ENCODE measurements at regions of chr4 and their contacts with region 1.

Region 1: DNA sequence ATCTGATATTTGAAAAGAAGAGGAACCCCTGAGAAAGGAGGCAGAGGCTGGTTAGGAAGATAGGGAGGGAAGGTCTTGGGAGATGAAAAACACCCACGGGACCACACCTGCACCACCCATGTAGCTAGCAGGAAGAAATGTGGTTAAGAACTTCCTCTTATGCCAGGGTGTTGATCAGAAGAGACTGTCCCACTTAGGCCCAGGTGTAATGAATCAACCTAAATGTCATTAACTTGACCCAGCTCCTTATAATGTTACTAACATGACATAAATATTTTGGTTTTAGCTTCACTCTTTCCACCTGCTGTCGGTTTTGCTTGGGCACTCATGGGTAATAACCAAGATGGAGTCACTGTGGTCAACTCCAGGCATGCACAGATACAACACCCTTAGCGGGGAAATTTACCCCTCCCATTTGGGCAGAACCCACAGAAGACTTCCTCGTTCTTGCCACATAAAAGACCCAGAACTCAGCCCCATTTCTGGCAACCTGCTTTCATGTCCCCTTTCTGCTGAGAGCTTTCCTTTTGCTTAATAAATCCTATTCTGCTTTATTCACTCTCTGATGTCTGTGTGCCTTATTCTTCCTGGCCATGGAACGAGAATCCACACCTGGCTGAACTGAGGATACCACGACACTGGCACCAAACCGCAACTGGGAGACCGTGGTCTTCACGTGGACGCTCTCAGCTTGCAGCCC is 46.8 kb downstream of the ZNF141 start:
- DNase-seq: no peak
- H3K4me3 ChIP-seq: no peak overlapping the region
- H3K27ac ChIP-seq: no peak overlapping the region
- H3K4me1 ChIP-seq: no peaks in the 10 kb centered on the region
- H3K27me3 ChIP-seq: no peaks in the 10 kb centered on the region
- CTCF ChIP-seq: no peak

Region 2: GRCh38 chr4:445410-445809 is 60.9 kb after region 1 on chr4:
- CTCF ChIA-PET with region 1: no interaction called
- dilution Hi-C with region 1: loop called (anchors 5 kb)
- in situ Hi-C with region 1: no loop called
- intact Hi-C with region 1: no loop called
- DNase-seq: no peak
- H3K4me3 ChIP-seq: no peak overlapping the region
- H3K27ac ChIP-seq: no peak overlapping the region
- H3K4me1 ChIP-seq: no peaks in the 10 kb centered on the region
- H3K27me3 ChIP-seq: no peaks in the 10 kb centered on the region
- CTCF ChIP-seq: no peak

Region 3: DNA sequence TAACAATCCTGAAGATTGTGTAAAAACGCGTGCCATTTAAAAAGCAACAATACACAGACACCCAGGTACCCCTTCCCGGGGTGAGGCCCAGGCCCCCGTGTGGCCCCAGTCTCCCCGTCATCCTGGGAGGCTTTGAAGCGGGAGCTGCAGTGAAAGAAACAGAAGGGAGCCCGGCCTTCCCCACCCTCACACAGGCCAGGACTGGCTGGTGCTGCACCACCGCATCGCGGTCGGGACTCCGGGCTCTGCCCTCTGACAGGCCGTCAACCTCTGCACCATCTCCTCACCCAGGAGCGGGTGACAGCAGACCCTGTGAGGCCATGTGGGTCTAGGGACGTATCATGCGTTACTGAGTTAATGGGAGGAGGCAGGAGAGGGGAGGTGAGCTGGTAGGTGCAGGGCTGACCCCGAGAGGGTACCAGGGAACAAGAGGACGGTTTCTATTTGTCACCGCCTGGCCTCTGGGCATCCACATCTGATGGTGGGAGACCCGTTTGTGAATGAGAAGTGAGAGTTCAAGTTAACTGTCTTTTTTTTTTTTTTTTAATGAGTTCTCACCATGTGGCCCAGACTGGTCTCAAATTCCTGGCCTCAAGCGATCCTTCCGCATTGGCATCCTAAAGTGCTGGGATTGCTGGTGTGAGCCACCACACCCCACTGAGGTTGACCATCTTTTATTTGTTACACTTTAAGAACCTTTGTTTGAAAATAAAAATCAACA is 141.9 kb after region 1 on chr4:
- CTCF ChIA-PET with region 1: no interaction called
- dilution Hi-C with region 1: no loop called
- in situ Hi-C with region 1: no loop called
- intact Hi-C with region 1: no loop called
- DNase-seq: no peak
- H3K4me3 ChIP-seq: no peak overlapping the region
- H3K27ac ChIP-seq: no peak overlapping the region
- H3K4me1 ChIP-seq: no peaks in the 10 kb centered on the region
- H3K27me3 ChIP-seq: no peaks in the 10 kb centered on the region
- CTCF ChIP-seq: no peak

Measured in mammary epithelial cell (primary cell).